ENCODE measurements at regions of chr12 and their contacts with region 1.

Region 1: DNA sequence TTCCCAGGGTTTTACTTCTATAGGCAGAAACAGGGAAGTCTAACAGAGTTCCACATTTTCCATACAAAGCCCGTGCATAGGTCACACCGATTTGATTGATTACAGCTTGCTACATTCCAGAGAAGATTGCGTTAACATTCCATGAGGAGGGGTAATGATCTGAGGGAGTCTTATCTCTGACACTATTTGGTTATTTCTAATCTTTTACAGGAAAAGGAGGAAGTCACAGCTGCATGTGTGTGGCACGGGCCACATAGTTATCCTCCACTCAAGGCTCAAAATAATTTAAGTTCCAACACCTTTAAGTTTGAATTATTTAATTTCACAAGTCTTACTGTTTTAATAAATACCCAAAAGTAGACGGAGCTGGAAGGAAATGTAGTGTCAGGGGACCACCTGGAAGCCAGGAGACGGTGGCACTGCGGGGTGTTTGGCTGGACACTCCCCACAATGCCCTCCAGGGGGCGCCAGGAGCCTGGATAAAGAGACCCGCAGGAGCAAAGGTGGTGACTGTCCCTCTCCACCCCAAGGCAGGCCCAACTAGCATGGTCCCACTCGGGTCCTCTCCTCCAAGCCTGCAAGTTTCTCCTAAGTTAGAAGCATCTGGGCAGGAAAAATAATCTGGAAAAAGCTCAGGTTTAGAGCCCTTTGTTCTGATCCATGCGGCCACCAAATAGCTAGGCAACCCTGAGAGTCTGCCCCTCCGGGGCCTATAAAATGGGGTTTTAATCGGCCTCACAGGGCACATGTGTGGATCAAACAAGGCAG is 20.2 kb downstream of the KRT8 start:
- DNase-seq: peak; percentile 86
- ATAC-seq: peak; percentile 82
- H3K4me3 Mint-ChIP-seq: no peak overlapping the region
- H3K27ac Mint-ChIP-seq: no peak overlapping the region
- H3K4me1 Mint-ChIP-seq: peaks cover 7% of the 10 kb centered on the region
- H3K27me3 Mint-ChIP-seq: peaks cover 9% of the 10 kb centered on the region

Region 2: GRCh38 chr12:52870351-52871290 is 14.1 kb before region 1 on chr12:
- CTCF ChIA-PET with region 1: interaction called, 49 read pairs
- POLR2A ChIA-PET with region 1: no interaction called
- DNase-seq: peak; percentile 85
- ATAC-seq: peak; percentile 60
- H3K4me3 Mint-ChIP-seq: no peak overlapping the region
- H3K27ac Mint-ChIP-seq: no peak overlapping the region
- H3K4me1 Mint-ChIP-seq: peaks cover 36% of the 10 kb centered on the region
- H3K27me3 Mint-ChIP-seq: peaks cover 6% of the 10 kb centered on the region

Region 3: DNA sequence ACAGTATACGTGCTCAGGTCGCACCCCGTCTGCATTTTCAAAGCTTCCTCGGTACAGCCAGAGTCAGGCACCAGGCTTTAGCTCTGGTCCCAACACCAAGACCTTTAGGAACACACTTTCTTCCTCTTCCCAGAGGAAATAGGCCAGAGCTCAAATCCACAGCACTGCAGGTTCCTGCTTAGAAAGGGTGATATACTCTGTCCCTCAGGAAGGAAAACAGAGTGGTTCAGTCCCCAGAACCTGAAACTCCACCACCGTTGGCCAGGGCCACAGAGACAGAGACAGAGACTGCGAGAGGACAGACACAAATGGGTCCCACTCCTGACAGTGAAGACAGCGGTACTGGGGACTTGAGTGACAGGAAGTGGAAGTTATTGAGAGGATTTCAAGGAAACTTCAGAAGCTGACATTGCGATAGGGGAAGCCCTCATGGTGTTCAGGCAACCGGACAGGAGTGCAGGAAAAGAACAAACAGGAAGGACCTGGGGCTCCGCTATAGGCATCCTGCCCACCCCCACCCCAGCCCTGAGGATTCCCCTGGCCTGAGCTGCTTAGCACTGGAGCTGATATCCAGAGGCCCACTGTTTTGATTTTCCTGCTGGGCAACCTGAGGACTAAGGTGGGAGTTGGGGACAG is 25.7 kb after region 1 on chr12:
- CTCF ChIA-PET with region 1: interaction called, 12 read pairs
- POLR2A ChIA-PET with region 1: no interaction called
- DNase-seq: no peak
- ATAC-seq: no peak
- H3K4me3 Mint-ChIP-seq: no peak overlapping the region
- H3K27ac Mint-ChIP-seq: no peak overlapping the region
- H3K4me1 Mint-ChIP-seq: peaks cover 5% of the 10 kb centered on the region
- H3K27me3 Mint-ChIP-seq: peaks cover 6% of the 10 kb centered on the region

Region 4: GRCh38 chr12:52949413-52950331 is 65.0 kb after region 1 on chr12:
- CTCF ChIA-PET with region 1: interaction called, 20 read pairs
- POLR2A ChIA-PET with region 1: interaction called, 3 read pairs
- DNase-seq: no peak
- ATAC-seq: no peak
- H3K4me3 Mint-ChIP-seq: peak overlapping the region; percentile 62
- H3K27ac Mint-ChIP-seq: no peak overlapping the region
- H3K4me1 Mint-ChIP-seq: peaks cover 2% of the 10 kb centered on the region
- H3K27me3 Mint-ChIP-seq: no peaks in the 10 kb centered on the region

Region 5: GRCh38 chr12:52980693-52981423 is 96.1 kb after region 1 on chr12:
- CTCF ChIA-PET with region 1: interaction called, 445 read pairs
- POLR2A ChIA-PET with region 1: interaction called, 6 read pairs
- DNase-seq: peak; percentile 90
- ATAC-seq: peak; percentile 91
- H3K4me3 Mint-ChIP-seq: no peak overlapping the region
- H3K27ac Mint-ChIP-seq: no peak overlapping the region
- H3K4me1 Mint-ChIP-seq: no peaks in the 10 kb centered on the region
- H3K27me3 Mint-ChIP-seq: peaks cover 30% of the 10 kb centered on the region

Measured in activated CD8-positive, alpha-beta T cell treated with anti-CD3 and anti-CD28 coated beads, Interleukin-2, amount 10 ng/mL, durations not matched to agents 7 days and 5 days (primary cell).